Thyroid gland (tissue), 4 donors: ENCODE measurements at regions of chr19 and their contacts with region 1.

Region 1: DNA sequence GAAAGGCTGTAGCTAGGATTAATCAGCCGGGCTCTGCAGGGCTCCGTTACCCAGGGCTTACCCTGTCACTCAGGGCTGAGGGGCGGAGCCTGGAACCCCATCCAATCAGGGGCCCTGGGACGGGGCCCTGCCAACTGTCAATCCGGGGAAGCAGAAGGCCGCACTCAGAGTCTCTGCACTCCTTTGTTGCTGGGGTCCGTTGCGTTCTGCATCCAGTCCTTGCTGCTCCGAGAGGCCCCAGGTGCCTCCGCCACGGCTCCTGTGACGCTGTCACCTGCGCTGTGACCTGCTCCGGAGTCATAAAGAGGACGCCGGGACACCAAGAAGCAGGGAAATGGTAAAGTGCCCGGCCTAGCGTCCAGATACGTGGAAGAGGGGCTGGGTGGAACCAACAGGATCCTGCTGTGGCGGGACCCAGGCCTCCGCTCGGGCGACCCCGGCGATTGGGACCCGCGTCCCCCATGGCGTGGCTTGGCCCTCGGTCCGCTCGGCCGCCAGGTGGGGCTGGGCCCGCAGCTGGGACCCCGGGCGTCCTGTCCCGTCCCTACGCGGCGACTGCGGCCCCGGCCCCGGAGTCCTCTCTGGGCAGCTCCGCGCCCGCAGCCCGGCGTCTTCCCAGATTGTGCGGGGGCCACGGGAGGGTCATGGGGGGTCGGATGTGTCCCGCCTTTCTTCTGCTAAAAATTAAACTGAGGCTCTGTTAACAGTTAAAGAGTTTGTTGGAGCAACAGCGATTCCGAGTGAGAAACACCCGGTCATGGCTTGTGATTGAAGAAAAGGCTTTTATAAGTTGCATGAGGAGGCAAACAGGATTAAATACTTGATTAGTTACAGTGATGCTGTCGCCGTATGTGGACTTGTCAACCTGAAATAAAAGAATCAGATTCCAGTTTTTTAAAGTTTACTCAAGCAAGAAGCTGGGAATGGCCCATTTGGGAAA is at the start of gene ZNF491:
- DNase-seq: peak; percentile 97 to 98
- H3K4me3 ChIP-seq: peak within 1 kb of the TSS; percentile 71 to 85 (median 82)
- H3K27ac ChIP-seq: peak within 1 kb of the TSS; percentile 49 to 86 (median 58)
- H3K4me1 ChIP-seq: peaks cover 8 to 15% of the 10 kb centered on the region in 2 donors
- H3K27me3 ChIP-seq: no peaks in the 10 kb centered on the region
- CTCF ChIP-seq: peak in 1 of 6 experiments; percentile 12
- POLR2A ChIP-seq: peak in 1 of 2 donors; percentile 94
- total RNA-seq, gene ZNF491: 2.9 to 3.2 (median 3.1) TPM

Region 2: DNA sequence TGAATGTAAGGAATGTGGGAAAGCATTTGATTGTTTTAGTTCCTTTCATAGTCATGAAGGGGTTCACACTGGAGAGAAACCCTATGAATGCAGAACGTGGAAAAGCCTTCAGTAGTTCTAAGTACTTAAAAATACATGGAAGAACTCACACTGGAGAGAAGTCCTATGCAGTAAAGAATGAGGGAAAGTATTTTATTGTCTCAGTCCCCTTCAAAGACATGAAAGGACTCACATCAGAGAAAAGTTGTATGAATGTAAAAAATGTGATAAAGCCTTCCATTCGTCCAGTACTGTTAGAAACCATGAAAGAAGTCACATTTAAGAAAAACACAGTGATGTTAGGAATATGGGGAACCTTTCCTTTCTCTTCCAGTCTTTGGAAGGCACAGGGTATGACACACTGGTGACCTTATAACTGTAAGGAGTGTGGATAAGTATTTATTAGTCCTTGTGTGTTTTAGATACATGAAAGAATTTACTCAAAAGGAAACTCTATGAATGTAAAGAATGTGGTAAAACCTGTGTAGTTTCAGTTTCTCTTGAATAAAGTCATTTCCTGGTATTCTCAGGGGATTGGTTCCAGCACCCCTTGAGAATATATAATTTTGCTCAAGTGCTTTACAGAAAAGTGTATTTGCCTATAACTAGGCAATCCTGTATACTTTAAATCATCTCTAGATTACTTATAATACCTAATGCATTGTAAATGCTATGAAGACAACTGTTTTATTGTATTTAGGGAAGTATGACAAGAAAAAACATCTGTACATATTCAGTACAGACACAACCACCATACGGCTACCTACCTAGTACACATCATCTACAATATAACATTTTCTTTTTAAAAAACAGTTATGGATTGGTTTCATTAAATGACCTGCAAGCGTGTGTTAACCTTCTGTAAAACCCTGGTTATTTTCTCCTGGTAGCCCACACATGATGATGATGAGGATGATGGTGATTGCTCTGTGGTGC is 112.7 kb before region 1 on chr19:
- intact Hi-C with region 1: loop called (anchors 10 kb)
- DNase-seq: no peak
- H3K4me3 ChIP-seq: no peak overlapping the region
- H3K27ac ChIP-seq: no peak overlapping the region
- H3K4me1 ChIP-seq: no peaks in the 10 kb centered on the region
- H3K27me3 ChIP-seq: no peaks in the 10 kb centered on the region
- CTCF ChIP-seq: no peak
- POLR2A ChIP-seq: no peak

Region 3: DNA sequence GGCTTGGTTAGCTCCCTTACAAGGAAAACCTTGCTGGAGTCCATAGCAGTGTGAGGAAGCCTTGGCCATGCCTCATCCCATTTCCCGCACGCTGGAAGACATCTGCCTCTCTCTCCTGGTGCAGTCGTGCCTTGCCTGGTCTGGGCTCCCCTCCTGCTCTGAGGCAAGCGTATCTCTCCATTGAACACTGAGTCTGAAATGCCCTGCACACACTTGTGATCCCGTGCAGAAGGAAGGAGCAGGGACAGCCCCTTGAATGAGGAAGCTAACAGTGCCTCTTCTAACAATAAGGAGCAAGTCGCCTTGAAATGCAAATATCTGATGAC is 15.0 kb after region 1 on chr19:
- intact Hi-C with region 1: loop called (anchors 2 kb)
- DNase-seq: no peak
- H3K4me3 ChIP-seq: peak overlapping the region; percentile 3 to 77 (median 65)
- H3K27ac ChIP-seq: peak overlapping the region in 1 of 3 donors; percentile 81
- H3K4me1 ChIP-seq: peaks cover 0 to 11% of the 10 kb centered on the region in 2 donors
- H3K27me3 ChIP-seq: no peaks in the 10 kb centered on the region
- CTCF ChIP-seq: no peak
- POLR2A ChIP-seq: no peak